ENCODE measurements at regions of chr2 and their contacts with region 1.

Region 1: GRCh38 chr2:234308813-234309195 is 188.1 kb downstream of the ARL4C start:
- DNase-seq: peak; percentile 28 to 87 (median 82)
- ATAC-seq: peak; percentile 94
- H3K4me3 ChIP-seq: no peak overlapping the region
- H3K4me3 Mint-ChIP-seq: peak overlapping the region; percentile 21 to 84 (median 70)
- H3K27ac ChIP-seq: peak overlapping the region; percentile 65
- H3K27ac Mint-ChIP-seq: peak overlapping the region; percentile 77 to 98 (median 93)
- H3K4me1 ChIP-seq: peaks cover 6 to 21% of the 10 kb centered on the region in 2 donors
- H3K4me1 Mint-ChIP-seq: peaks cover 20 to 71% (median 41%) of the 10 kb centered on the region in 7 donors
- H3K27me3 ChIP-seq: no peaks in the 10 kb centered on the region
- H3K27me3 Mint-ChIP-seq: no peaks in the 10 kb centered on the region

Region 2: DNA sequence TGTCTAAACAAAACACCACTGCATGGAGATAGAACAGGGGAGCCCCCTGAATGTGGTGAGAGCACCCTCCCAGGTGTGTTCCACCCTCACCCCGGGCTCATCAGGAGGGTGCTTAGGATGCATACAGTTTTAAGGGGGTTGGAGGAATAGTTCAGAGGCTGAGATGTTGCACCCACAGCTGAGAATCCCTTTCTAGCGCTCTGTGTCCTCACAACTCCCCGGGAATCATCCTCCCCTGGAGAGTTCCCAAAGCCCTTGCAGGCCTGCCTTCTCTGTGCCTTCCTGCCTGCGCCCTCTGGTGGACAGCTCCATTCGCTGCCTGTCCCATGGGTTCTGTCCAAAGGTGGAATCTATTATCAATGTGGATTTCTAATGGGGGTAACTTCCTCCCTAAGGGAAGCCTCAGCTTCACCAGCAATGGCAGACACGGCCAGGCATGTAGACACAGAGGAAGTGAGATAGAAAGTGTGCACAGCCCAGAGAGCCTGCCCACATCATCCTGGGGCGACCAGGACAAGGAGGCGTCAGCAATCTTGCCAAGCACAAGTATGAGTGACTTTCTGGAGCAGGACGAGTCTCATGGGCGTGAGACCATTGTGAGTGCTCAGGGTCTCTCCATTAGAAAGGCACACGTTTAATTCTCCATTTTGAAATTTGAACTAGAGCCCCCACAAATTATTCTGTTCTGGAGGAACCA is 597.3 kb before region 1 on chr2:
- CTCF ChIA-PET with region 1: no interaction called
- POLR2A ChIA-PET with region 1: no interaction called
- intact Hi-C with region 1: no loop called
- DNase-seq: peak; percentile 16 to 66 (median 48)
- ATAC-seq: peak; percentile 75
- H3K4me3 ChIP-seq: no peak overlapping the region
- H3K4me3 Mint-ChIP-seq: no peak overlapping the region
- H3K27ac ChIP-seq: no peak overlapping the region
- H3K27ac Mint-ChIP-seq: peak overlapping the region in 1 of 9 donors; percentile 17
- H3K4me1 ChIP-seq: no peaks in the 10 kb centered on the region
- H3K4me1 Mint-ChIP-seq: peaks cover 0 to 5% (median 0%) of the 10 kb centered on the region in 7 donors
- H3K27me3 ChIP-seq: peaks cover 0 to 6% of the 10 kb centered on the region in 2 donors
- H3K27me3 Mint-ChIP-seq: peaks cover 21 to 40% (median 23%) of the 10 kb centered on the region in 5 donors

Region 3: GRCh38 chr2:233938676-233939370 is 370.0 kb before region 1 on chr2:
- CTCF ChIA-PET with region 1: no interaction called
- POLR2A ChIA-PET with region 1: no interaction called
- intact Hi-C with region 1: no loop called
- DNase-seq: no peak
- ATAC-seq: no peak
- H3K4me3 ChIP-seq: peak overlapping the region; percentile 23
- H3K4me3 Mint-ChIP-seq: peak overlapping the region; percentile 41 to 77 (median 66)
- H3K27ac ChIP-seq: no peak overlapping the region
- H3K27ac Mint-ChIP-seq: no peak overlapping the region
- H3K4me1 ChIP-seq: peaks cover 0 to 5% of the 10 kb centered on the region in 2 donors
- H3K4me1 Mint-ChIP-seq: peaks cover 0 to 13% (median 8%) of the 10 kb centered on the region in 7 donors
- H3K27me3 ChIP-seq: no peaks in the 10 kb centered on the region
- H3K27me3 Mint-ChIP-seq: peaks cover 46 to 68% (median 62%) of the 10 kb centered on the region in 5 donors

Region 4: DNA sequence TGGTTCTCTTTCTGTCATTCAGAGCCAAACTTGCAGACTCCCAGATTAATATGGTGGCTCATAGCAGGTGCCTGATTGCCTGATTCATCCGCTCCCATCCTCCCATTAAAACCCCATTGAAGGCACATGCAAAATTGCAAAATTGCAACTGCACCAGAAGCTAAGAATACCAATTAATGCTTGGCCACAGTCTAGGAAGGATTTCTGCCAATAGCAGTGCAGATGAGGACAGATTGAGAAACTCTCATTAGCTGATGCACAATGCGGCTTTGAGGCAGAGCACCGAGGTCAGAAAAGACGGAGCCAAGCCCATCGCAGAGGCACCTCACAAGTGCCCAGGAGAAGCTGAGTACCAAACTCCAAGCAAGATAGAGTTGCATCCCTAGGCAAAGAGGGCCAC is 15.3 kb after region 1 on chr2:
- CTCF ChIA-PET with region 1: no interaction called
- POLR2A ChIA-PET with region 1: interaction called, 4 read pairs
- intact Hi-C with region 1: loop called (anchors 1 to 2 kb)
- DNase-seq: no peak
- ATAC-seq: no peak
- H3K4me3 ChIP-seq: no peak overlapping the region
- H3K4me3 Mint-ChIP-seq: peak overlapping the region in 4 of 10 donors; percentile 5 to 52 (median 28)
- H3K27ac ChIP-seq: no peak overlapping the region
- H3K27ac Mint-ChIP-seq: peak overlapping the region; percentile 81 to 98 (median 89)
- H3K4me1 ChIP-seq: peaks cover 15 to 23% of the 10 kb centered on the region in 2 donors
- H3K4me1 Mint-ChIP-seq: peaks cover 21 to 76% (median 56%) of the 10 kb centered on the region in 7 donors
- H3K27me3 ChIP-seq: no peaks in the 10 kb centered on the region
- H3K27me3 Mint-ChIP-seq: no peaks in the 10 kb centered on the region

Region 5: GRCh38 chr2:234335661-234336228 is 26.9 kb after region 1 on chr2:
- CTCF ChIA-PET with region 1: no interaction called
- POLR2A ChIA-PET with region 1: no interaction called
- intact Hi-C with region 1: loop called in 1 of 2 experiments (anchors 2 kb)
- DNase-seq: peak in 8 of 9 donors; percentile 33 to 75 (median 70)
- ATAC-seq: peak; percentile 92
- H3K4me3 ChIP-seq: peak overlapping the region; percentile 3
- H3K4me3 Mint-ChIP-seq: peak overlapping the region; percentile 56 to 85 (median 78)
- H3K27ac ChIP-seq: peak overlapping the region; percentile 24
- H3K27ac Mint-ChIP-seq: peak overlapping the region; percentile 61 to 98 (median 93)
- H3K4me1 ChIP-seq: peaks cover 0 to 16% of the 10 kb centered on the region in 2 donors
- H3K4me1 Mint-ChIP-seq: peaks cover 15 to 60% (median 45%) of the 10 kb centered on the region in 7 donors
- H3K27me3 ChIP-seq: no peaks in the 10 kb centered on the region
- H3K27me3 Mint-ChIP-seq: no peaks in the 10 kb centered on the region

Region 6: GRCh38 chr2:234355021-234355720 is 46.4 kb after region 1 on chr2:
- CTCF ChIA-PET with region 1: interaction called, 3 read pairs
- POLR2A ChIA-PET with region 1: interaction called, 4 read pairs
- intact Hi-C with region 1: loop called in 1 of 2 experiments (anchors 2 kb)
- DNase-seq: no peak
- ATAC-seq: no peak
- H3K4me3 ChIP-seq: no peak overlapping the region
- H3K4me3 Mint-ChIP-seq: peak overlapping the region in 1 of 10 donors; percentile 48
- H3K27ac ChIP-seq: no peak overlapping the region
- H3K27ac Mint-ChIP-seq: peak overlapping the region in 7 of 9 donors; percentile 19 to 85 (median 68)
- H3K4me1 ChIP-seq: peaks cover 6 to 13% of the 10 kb centered on the region in 2 donors
- H3K4me1 Mint-ChIP-seq: peaks cover 9 to 36% (median 31%) of the 10 kb centered on the region in 7 donors
- H3K27me3 ChIP-seq: no peaks in the 10 kb centered on the region
- H3K27me3 Mint-ChIP-seq: no peaks in the 10 kb centered on the region

Region 7: DNA sequence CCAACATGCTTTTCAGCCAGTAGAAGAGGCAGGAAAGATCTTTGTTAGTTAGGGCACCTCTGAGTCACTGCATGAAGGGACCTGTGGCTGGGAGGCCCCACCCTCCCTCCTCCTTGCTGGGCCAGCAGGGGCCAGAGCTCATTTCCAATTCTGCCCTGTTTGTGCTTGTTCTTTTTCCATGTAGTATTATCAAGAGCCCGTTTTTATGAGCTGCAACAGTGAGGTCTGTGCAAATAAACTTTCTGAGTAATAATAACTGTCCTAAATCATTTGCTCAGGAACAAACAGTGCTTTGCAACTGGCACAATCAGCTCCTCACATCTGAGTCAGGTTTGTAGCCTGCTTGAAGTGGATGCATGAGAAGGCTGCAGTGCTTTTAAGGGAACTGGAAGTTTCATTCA is 60.1 kb after region 1 on chr2:
- CTCF ChIA-PET with region 1: interaction called, 3 read pairs
- POLR2A ChIA-PET with region 1: interaction called, 4 read pairs
- intact Hi-C with region 1: loop called (anchors 5 kb)
- DNase-seq: peak in 7 of 9 donors; percentile 13 to 43 (median 28)
- ATAC-seq: peak; percentile 78
- H3K4me3 ChIP-seq: no peak overlapping the region
- H3K4me3 Mint-ChIP-seq: peak overlapping the region; percentile 6 to 80 (median 46)
- H3K27ac ChIP-seq: peak overlapping the region; percentile 48
- H3K27ac Mint-ChIP-seq: peak overlapping the region; percentile 81 to 98 (median 90)
- H3K4me1 ChIP-seq: peaks cover 31 to 71% of the 10 kb centered on the region in 2 donors
- H3K4me1 Mint-ChIP-seq: peaks cover 47 to 86% (median 80%) of the 10 kb centered on the region in 7 donors
- H3K27me3 ChIP-seq: no peaks in the 10 kb centered on the region
- H3K27me3 Mint-ChIP-seq: no peaks in the 10 kb centered on the region

Region 8: DNA sequence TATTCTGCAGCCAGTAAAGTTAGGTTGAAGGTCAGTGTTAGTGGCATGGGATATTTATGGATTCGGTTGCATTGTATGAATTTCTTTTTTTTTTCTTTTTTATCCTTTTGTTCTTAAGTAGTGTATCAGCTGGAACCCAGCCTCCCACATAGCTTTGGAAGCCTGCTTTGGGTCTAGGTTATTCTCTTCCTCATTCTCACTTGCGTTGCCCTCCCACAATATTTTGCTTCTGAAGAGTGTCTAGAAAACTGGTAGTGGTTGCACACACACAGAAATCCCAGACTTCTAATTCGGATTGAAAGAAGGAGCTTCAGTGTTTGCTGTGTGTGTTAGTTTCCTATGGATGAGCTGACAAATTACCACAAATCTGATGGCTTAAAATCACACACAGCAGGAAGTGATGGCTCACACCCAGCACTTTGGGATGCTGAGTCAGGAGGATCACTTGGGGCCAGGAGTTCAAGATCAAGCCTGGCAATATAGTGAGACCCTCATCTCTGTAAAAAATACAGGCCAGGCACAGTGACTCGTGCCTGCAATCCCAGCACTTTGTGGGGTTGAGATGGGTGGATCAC is 83.3 kb after region 1 on chr2:
- CTCF ChIA-PET with region 1: no interaction called
- POLR2A ChIA-PET with region 1: interaction called, 3 read pairs
- intact Hi-C with region 1: loop called in 1 of 2 experiments (anchors 5 kb)
- DNase-seq: no peak
- ATAC-seq: no peak
- H3K4me3 ChIP-seq: no peak overlapping the region
- H3K4me3 Mint-ChIP-seq: peak overlapping the region in 9 of 10 donors; percentile 35 to 84 (median 46)
- H3K27ac ChIP-seq: peak overlapping the region; percentile 53
- H3K27ac Mint-ChIP-seq: peak overlapping the region; percentile 17 to 98 (median 94)
- H3K4me1 ChIP-seq: peaks cover 21 to 53% of the 10 kb centered on the region in 2 donors
- H3K4me1 Mint-ChIP-seq: peaks cover 34 to 73% (median 65%) of the 10 kb centered on the region in 7 donors
- H3K27me3 ChIP-seq: no peaks in the 10 kb centered on the region
- H3K27me3 Mint-ChIP-seq: no peaks in the 10 kb centered on the region

Region 9: GRCh38 chr2:234483568-234484251 is 174.9 kb after region 1 on chr2:
- CTCF ChIA-PET with region 1: interaction called, 4 read pairs
- POLR2A ChIA-PET with region 1: interaction called, 3 read pairs
- intact Hi-C with region 1: loop called in 1 of 2 experiments (anchors 1 kb)
- DNase-seq: peak; percentile 50 to 88 (median 80)
- ATAC-seq: peak; percentile 89
- H3K4me3 ChIP-seq: peak overlapping the region; percentile 28
- H3K4me3 Mint-ChIP-seq: peak overlapping the region; percentile 60 to 81 (median 67)
- H3K27ac ChIP-seq: peak overlapping the region; percentile 94
- H3K27ac Mint-ChIP-seq: peak overlapping the region; percentile 87 to 99 (median 95)
- H3K4me1 ChIP-seq: peaks cover 63 to 72% of the 10 kb centered on the region in 2 donors
- H3K4me1 Mint-ChIP-seq: peaks cover 44 to 95% (median 84%) of the 10 kb centered on the region in 7 donors
- H3K27me3 ChIP-seq: no peaks in the 10 kb centered on the region
- H3K27me3 Mint-ChIP-seq: no peaks in the 10 kb centered on the region

Measured in naive thymus-derived CD4-positive, alpha-beta T cell (primary cell).